ENCODE measurements at regions of chr3 and their contacts with region 1.

Region 1: DNA sequence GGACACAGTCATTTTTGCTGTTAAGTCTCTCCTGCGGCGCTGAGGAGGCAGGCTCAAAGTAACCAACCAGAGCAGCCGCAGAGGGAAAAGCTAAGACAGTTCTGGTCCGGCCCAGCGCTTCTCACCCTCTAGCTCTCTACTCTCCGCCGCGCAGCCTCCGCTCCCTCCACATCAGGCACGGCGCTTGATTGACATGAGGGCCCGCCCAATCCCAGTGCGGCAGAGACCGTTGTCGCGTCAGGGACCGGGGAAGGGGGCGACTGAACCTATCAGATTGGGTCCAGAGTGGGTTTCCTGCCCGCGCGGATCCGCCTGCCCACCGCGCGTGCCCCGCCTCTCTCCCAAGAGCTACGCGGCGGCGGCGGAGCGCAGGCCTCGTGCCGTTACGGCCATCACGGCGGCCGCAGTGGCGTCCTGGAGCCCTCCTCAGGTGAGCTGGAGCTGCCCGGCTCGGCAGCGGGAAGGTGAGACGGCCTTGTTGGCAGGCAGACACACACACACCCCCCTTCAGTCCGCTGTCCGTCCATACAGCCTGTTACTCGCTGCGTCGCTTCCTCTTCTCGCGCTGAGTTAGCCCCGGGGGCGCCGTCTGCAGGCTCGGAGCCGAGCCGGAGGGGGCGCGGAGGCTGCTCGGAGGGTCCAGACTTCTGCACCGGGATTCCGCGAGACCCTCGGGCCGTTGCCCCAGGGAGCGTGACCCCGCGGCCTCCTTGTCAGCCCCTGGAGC is at the start of gene NCK1:
- DNase-seq: peak; percentile 92 to 99
- H3K4me3 ChIP-seq: peak within 1 kb of the TSS; percentile 86
- H3K27ac ChIP-seq: peak within 1 kb of the TSS; percentile 82
- H3K4me1 ChIP-seq: peaks cover 20% of the 10 kb centered on the region
- H3K27me3 ChIP-seq: no peaks in the 10 kb centered on the region
- CTCF ChIP-seq: no peak
- total RNA-seq, gene NCK1: 42.7 and 71.4 TPM in 2 replicates

Region 2: DNA sequence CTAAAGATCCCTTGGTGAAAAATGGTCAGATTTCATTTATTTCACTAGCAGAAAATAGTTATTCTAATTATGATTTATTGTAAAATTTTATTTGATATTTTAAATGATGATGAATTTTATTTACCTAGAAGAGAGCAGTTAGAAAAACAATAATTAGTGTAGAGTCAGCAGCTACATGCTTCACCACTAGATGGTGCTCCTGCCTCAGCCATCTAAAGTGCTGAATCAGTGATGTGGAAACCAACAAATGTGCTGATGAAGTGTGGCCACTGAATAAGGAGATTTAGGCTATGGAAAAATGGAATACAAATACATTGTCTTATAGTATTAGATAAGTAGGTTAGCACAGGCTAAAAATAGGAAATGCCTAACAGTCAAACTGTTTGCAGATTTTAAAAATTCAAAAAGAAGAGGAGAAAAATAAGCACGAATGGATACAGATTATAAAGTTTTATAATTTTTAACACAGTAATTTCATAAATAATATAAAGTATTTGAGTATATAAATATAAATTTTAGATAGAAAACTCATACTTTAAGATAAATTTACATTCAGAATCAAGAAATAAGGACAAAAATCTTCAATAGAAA is 786.7 kb before region 1 on chr3:
- CTCF ChIA-PET with region 1: interaction called, 10 read pairs
- POLR2A ChIA-PET with region 1: no interaction called
- intact Hi-C with region 1: no loop called
- DNase-seq: peak; percentile 38 to 58
- H3K4me3 ChIP-seq: no peak overlapping the region
- H3K27ac ChIP-seq: no peak overlapping the region
- H3K4me1 ChIP-seq: no peaks in the 10 kb centered on the region
- H3K27me3 ChIP-seq: no peaks in the 10 kb centered on the region
- CTCF ChIP-seq: peak; percentile 95

Region 3: DNA sequence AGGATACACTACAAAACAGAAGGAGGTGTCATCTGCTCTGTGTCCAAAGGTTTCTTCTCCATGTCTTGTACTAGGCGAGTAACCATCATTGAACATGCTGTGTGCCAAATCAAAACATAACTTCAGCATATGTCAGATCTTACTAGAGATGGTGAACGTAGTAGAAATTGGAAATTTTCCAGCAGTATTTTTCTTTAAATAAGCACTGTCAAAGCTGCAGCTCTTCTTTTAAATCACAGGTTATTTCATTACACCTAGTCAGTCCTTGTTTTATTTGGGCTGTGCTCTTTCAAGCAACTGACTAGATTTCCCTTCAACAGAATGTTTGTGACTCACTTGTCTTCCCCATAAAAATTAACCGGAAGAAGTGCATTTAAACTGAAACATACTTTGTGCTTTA is 712.4 kb before region 1 on chr3:
- CTCF ChIA-PET with region 1: no interaction called
- POLR2A ChIA-PET with region 1: no interaction called
- intact Hi-C with region 1: no loop called
- DNase-seq: no peak
- H3K4me3 ChIP-seq: no peak overlapping the region
- H3K27ac ChIP-seq: no peak overlapping the region
- H3K4me1 ChIP-seq: no peaks in the 10 kb centered on the region
- H3K27me3 ChIP-seq: no peaks in the 10 kb centered on the region
- CTCF ChIP-seq: no peak

Region 4: DNA sequence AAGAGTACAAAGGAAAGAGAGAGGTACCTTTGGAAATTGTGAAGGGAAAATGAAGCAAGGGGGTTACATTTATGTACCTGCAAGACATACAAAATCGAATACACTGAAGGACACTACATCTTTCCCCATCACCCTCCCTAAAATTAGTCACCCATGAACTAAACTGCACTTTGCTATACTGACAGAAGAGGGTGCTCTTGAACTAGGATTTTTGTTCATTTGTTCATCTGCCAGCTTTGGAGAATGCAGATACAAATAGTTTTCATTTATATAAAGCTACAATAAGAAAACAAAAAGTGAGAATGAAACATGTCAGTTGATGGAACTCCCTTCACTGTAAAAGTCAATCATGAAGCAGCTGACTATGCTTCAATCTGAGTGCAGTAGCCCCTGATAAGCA is 556.2 kb before region 1 on chr3:
- CTCF ChIA-PET with region 1: interaction called, 12 read pairs
- POLR2A ChIA-PET with region 1: no interaction called
- intact Hi-C with region 1: no loop called
- DNase-seq: peak; percentile 7 to 36
- H3K4me3 ChIP-seq: no peak overlapping the region
- H3K27ac ChIP-seq: no peak overlapping the region
- H3K4me1 ChIP-seq: no peaks in the 10 kb centered on the region
- H3K27me3 ChIP-seq: no peaks in the 10 kb centered on the region
- CTCF ChIP-seq: peak; percentile 75

Region 5: DNA sequence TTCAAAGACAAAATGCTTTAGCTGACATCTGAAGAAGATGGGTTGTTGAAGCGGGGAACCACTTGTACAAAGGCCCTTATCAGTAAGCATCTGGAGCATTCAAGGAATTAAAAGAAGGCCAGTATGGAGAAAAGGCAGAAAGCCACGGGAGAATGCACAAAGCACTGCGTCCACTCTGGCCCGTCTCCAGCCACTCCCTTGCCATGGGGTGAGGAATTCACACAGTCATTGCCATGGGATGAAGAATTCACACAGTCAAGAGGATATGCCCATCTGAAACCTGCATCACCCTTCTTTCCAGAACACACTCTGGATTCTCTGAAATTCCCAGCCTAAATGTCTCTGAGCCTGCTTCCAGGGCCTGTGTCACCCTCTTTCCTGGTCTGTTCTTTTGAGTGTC is 83.2 kb before region 1 on chr3:
- CTCF ChIA-PET with region 1: no interaction called
- POLR2A ChIA-PET with region 1: no interaction called
- intact Hi-C with region 1: loop called (anchors 5 kb)
- DNase-seq: peak in 1 of 2 experiments; percentile 56
- H3K4me3 ChIP-seq: no peak overlapping the region
- H3K27ac ChIP-seq: no peak overlapping the region
- H3K4me1 ChIP-seq: no peaks in the 10 kb centered on the region
- H3K27me3 ChIP-seq: no peaks in the 10 kb centered on the region
- CTCF ChIP-seq: no peak

Region 6: GRCh38 chr3:136838641-136839555 is 23.2 kb before region 1 on chr3:
- CTCF ChIA-PET with region 1: interaction called, 13 read pairs
- POLR2A ChIA-PET with region 1: interaction called, 4 read pairs
- intact Hi-C with region 1: no loop called
- DNase-seq: peak in 1 of 2 experiments; percentile 60
- H3K4me3 ChIP-seq: no peak overlapping the region
- H3K27ac ChIP-seq: peak overlapping the region; percentile 38
- H3K4me1 ChIP-seq: 0 out of 2 replicates have a peak, but pooled peaks cover 12% of the 10 kb centered on the region
- H3K27me3 ChIP-seq: no peaks in the 10 kb centered on the region
- CTCF ChIP-seq: no peak

Region 7: GRCh38 chr3:137013955-137014688 is 152.1 kb after region 1 on chr3:
- CTCF ChIA-PET with region 1: interaction called, 3 read pairs
- POLR2A ChIA-PET with region 1: interaction called, 13 read pairs
- intact Hi-C with region 1: loop called (anchors 1 kb)
- DNase-seq: peak; percentile 66 to 88
- H3K4me3 ChIP-seq: no peak overlapping the region
- H3K27ac ChIP-seq: no peak overlapping the region
- H3K4me1 ChIP-seq: no peaks in the 10 kb centered on the region
- H3K27me3 ChIP-seq: no peaks in the 10 kb centered on the region
- CTCF ChIP-seq: peak; percentile 93

Region 8: DNA sequence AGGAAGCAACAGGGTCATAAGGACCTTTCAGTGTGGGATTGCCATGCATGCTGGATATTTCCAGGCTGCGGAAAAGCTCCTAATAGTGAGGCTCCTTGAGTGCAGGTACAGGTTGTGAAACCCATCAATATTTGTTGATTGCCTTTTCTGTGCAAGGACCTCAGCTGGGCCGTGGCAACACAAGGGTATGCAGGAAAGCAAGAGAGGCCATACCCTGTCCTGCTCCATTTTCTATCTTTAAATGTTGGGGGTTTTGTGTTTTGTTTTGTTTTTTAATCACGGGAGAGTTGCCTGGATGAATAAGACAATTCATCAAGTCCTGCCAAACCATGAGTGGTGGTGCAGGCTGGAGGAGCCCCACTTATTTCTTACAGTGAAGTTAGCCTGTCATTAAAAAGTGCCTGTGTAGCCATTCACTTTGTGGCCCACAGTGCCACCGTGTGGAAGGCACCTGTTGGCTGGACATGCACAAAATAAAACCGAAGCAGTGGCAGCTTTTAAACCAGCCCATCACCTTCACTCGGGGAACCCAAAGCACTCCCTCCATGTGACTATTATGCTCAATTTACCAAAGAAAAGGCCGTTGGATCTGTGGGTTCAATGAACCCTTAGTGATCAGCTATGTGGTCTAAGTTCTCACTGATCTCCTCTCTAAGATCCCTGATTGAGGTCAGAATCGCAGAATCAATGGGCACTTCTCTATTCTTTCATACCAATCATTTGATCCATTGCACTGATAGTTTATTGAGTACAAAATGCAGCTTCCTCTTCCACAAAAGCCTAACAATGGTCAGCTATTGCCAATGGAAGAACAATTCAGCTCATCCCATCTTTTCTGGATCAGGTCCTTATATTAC is 1190.1 kb after region 1 on chr3:
- CTCF ChIA-PET with region 1: no interaction called
- POLR2A ChIA-PET with region 1: no interaction called
- intact Hi-C with region 1: no loop called
- DNase-seq: peak in 1 of 2 experiments; percentile 50
- H3K4me3 ChIP-seq: no peak overlapping the region
- H3K27ac ChIP-seq: no peak overlapping the region
- H3K4me1 ChIP-seq: no peaks in the 10 kb centered on the region
- H3K27me3 ChIP-seq: no peaks in the 10 kb centered on the region
- CTCF ChIP-seq: peak; percentile 77